Heart left ventricle (tissue), 16 donors: ENCODE measurements at regions of chr6 and their contacts with region 1.

Region 1: DNA sequence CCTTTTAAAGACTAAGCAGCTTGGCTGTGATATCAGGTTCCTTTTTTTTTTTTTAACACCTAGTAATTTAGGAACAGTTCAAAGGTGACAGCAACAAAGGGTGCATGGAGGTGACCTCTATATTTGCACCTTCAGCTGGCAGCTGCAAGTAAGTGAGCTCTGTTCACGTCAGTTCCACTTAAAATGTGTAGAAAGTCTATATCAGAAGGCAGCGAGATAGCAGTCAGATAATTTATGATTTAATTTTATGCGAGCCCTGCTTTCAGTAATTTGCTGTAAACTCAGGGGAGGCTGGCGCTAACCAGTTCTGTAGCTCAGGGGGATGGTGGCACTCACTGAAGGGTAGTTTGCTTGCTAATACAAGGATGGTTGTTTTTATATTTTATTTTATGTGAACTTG is 602.8 kb upstream of the MMS22L start:
- DNase-seq: no peak
- ATAC-seq: no peak
- H3K4me3 ChIP-seq: no peak overlapping the region
- H3K27ac ChIP-seq: no peak overlapping the region
- H3K4me1 ChIP-seq: no peaks in the 10 kb centered on the region
- H3K27me3 ChIP-seq: no peaks in the 10 kb centered on the region
- CTCF ChIP-seq: no peak
- POLR2A ChIP-seq: no peak

Region 2: GRCh38 chr6:98254624-98255023 is 368.8 kb after region 1 on chr6:
- intact Hi-C with region 1: loop called in 1 of 10 experiments (anchors 10 kb)
- DNase-seq: no peak
- ATAC-seq: no peak
- H3K4me3 ChIP-seq: no peak overlapping the region
- H3K27ac ChIP-seq: no peak overlapping the region
- H3K4me1 ChIP-seq: no peaks in the 10 kb centered on the region
- H3K27me3 ChIP-seq: no peaks in the 10 kb centered on the region
- CTCF ChIP-seq: no peak
- POLR2A ChIP-seq: no peak